Head of caudate nucleus (tissue), 42 donors: ENCODE measurements at regions of chr2 and their contacts with region 1.

Region 1: DNA sequence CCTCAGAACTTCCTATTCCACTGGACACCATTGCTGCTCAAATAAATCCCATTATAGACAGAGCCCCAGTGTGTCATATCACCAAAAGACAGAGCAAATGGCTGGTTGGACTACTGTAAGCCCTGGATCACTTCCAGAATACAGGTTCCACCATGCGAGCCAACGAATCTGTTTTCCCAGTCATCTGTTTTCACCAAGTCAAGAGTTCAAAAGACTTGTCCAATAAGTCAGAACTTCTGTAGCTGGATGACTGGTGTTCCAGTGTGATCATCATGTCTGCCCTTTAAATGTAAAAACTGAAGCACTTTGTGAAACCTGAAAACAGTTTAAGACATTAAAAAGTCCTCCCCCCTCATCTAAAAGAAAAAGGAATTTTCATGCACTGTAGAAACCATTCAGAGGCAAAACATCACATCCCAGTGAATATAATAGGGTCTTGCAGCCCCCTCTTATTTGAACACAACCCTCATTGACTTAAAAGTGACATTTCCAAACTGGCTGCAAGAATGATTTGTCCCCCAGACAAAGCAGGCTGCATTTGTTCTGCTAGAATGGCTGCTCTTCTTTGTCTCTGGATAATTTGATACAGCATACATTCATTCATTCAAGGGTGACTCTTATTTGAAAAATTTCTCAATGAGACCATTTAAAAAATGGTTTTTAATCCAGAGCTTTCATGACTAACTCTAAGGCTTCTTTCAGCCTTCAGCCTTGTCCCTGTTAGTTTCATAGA is 64.6 kb upstream of the TANC1 start:
- DNase-seq: no peak

Region 2: GRCh38 chr2:158740127-158740526 is 163.8 kb before region 1 on chr2:
- intact Hi-C with region 1: no loop called
- DNase-seq: no peak

Region 3: DNA sequence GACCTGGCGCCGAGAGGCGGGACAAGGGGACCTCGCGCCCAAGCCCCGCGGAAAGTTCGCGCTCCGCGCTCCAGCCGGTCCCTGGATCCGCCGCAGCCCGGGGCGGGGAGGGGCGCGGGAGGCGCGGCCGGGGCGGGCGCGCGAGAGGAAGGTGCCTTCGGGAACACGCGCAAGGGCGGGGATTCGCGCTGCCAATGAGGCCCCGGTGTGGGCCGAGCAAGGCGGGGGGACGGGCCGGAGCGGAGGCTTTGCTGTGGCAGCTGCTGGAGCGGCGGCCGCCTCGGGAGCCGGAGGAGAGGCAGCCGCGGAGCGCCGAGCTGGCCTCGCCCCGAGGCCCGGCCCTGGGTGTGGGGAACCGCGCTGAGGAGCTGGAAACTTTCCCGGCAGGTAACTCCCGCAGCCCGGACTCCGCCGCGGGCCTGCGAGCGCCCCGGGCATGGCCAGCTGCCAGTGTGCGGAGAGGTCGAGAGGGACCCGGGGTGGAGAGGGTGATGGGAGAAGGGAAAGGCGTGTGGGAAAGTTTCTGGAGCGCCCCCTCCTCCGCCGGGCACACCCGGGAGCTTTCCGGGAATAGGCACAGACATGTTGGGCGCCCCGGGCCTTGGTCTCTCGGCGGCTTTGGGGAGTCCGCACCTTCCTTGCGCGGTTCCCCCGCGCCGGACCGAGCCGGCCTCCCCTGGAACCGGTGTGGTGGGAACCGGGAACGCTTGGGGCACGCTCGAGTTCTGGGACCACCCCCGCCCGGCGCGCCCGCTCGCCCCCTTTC is 64.7 kb after region 1 on chr2 and contains the start of gene TANC1:
- intact Hi-C with region 1: loop called (anchors 10 kb)
- DNase-seq: peak; percentile 82 to 98 (median 95)